Panc1 (cell line): ENCODE measurements at regions of chr5 and their contacts with region 1.

Region 1: DNA sequence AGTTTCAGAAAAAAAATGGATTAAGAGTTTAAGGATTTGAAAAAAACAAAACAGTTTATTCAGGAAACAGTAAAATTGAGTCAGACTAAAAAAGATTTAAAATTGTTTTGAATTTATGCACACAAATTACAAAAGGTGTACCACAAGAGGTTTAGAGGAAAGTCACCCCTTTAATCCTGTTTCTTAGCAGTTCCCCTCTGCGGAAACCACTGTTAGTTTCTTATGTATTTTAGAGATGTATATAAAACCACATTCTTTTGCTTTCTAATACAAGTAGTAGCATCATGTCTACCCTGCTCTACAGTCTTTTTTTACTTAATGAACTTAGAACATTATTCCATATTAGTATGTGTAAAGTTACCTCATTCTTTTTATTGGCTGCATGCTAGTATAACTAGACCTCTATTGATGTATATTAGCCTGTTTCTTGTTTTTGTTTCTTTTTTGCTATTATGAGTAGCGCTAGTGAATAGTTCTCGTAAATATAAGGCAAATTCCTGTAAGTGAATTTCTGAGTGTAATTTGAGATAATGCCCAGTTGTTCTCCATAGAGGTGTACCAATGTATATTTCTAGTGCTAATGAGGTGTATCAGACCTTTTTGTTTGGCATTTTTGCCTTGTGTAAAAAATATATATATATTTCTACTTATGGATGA is 20.0 kb downstream of the GPBP1 start:
- DNase-seq: no peak
- ATAC-seq: no peak
- H3K4me3 ChIP-seq: no peak overlapping the region
- H3K27ac ChIP-seq: no peak overlapping the region
- H3K4me1 ChIP-seq: no peaks in the 10 kb centered on the region
- H3K27me3 ChIP-seq: no peaks in the 10 kb centered on the region
- CTCF ChIP-seq: no peak

Region 2: GRCh38 chr5:57209351-57210040 is 15.6 kb after region 1 on chr5:
- CTCF ChIA-PET with region 1: interaction called, 9 read pairs
- POLR2A ChIA-PET with region 1: interaction called, 15 read pairs
- in situ Hi-C with region 1: no loop called
- intact Hi-C with region 1: no loop called
- DNase-seq: no peak
- ATAC-seq: peak; percentile 50; the same call in 1 of the 2 replicates
- H3K4me3 ChIP-seq: no peak overlapping the region
- H3K27ac ChIP-seq: no peak overlapping the region
- H3K4me1 ChIP-seq: 0 out of 2 replicates have a peak, but pooled peaks cover 3% of the 10 kb centered on the region
- H3K27me3 ChIP-seq: no peaks in the 10 kb centered on the region
- CTCF ChIP-seq: no peak

Region 3: GRCh38 chr5:57383093-57383861 is 189.4 kb after region 1 on chr5:
- CTCF ChIA-PET with region 1: no interaction called
- POLR2A ChIA-PET with region 1: no interaction called
- in situ Hi-C with region 1: no loop called
- intact Hi-C with region 1: no loop called
- DNase-seq: peak; percentile 82
- ATAC-seq: peak; percentile 97
- H3K4me3 ChIP-seq: peak overlapping the region in 1 of 2 experiments; percentile 39; a peak in 2 of 4 replicates
- H3K27ac ChIP-seq: peak overlapping the region; percentile 92
- H3K4me1 ChIP-seq: peaks cover 16% of the 10 kb centered on the region; the same call in 1 of the 2 replicates
- H3K27me3 ChIP-seq: no peaks in the 10 kb centered on the region
- CTCF ChIP-seq: peak; percentile 50